Activated CD4-positive, alpha-beta T cell treated with anti-CD3 and anti-CD28 coated beads for 36 hours (primary cell): ENCODE measurements at regions of chr2 and their contacts with region 1.

Region 1: GRCh38 chr2:64228126-64228678 is 84.0 kb upstream of the PELI1 start:
- DNase-seq: peak; percentile 80
- ATAC-seq: peak; percentile 83
- H3K4me3 Mint-ChIP-seq: peak overlapping the region; percentile 72
- H3K27ac Mint-ChIP-seq: peak overlapping the region; percentile 91
- H3K4me1 Mint-ChIP-seq: peaks cover 28% of the 10 kb centered on the region
- H3K27me3 Mint-ChIP-seq: peaks cover 2% of the 10 kb centered on the region

Region 2: DNA sequence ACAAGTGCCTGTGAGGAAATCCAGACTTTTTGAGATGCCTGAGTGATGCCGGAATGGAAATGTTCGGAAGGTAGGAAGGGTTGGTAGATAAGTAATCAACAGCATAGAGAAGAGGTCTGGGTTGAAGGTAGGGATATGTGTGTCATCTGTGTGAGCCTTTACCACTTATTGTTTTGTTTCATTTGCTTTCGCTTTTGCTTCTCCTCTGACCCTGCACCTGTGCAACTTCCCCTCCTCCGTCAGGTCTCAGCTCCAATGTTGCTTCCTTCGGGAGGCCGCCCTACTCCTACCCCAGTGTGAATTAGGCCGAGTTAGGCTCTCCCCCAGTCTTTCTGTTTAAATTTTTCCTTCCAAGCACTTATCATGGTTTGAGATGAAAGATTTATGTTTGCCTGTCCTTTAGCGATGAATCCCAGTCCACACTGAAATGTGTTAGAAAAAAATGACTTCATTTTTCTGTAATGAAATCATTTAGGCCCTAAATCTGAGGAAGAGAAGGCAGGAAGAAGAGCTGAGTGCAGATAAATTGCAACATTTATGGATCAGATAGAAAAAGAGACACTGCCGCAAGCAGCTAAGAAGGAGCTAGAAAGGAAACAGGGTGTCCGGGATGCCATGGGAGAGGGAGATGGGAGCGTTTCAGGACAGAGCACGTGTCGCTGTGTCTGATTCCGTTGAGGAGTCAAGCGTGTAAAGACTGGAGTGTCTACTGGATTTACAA is 55.6 kb after region 1 on chr2:
- CTCF ChIA-PET with region 1: interaction called, 3 read pairs
- POLR2A ChIA-PET with region 1: interaction called, 3 read pairs
- intact Hi-C with region 1: loop called in 1 of 2 experiments (anchors 5 kb)
- DNase-seq: peak; percentile 39
- ATAC-seq: peak; percentile 100
- H3K4me3 Mint-ChIP-seq: no peak overlapping the region
- H3K27ac Mint-ChIP-seq: no peak overlapping the region
- H3K4me1 Mint-ChIP-seq: no peaks in the 10 kb centered on the region
- H3K27me3 Mint-ChIP-seq: no peaks in the 10 kb centered on the region

Region 3: DNA sequence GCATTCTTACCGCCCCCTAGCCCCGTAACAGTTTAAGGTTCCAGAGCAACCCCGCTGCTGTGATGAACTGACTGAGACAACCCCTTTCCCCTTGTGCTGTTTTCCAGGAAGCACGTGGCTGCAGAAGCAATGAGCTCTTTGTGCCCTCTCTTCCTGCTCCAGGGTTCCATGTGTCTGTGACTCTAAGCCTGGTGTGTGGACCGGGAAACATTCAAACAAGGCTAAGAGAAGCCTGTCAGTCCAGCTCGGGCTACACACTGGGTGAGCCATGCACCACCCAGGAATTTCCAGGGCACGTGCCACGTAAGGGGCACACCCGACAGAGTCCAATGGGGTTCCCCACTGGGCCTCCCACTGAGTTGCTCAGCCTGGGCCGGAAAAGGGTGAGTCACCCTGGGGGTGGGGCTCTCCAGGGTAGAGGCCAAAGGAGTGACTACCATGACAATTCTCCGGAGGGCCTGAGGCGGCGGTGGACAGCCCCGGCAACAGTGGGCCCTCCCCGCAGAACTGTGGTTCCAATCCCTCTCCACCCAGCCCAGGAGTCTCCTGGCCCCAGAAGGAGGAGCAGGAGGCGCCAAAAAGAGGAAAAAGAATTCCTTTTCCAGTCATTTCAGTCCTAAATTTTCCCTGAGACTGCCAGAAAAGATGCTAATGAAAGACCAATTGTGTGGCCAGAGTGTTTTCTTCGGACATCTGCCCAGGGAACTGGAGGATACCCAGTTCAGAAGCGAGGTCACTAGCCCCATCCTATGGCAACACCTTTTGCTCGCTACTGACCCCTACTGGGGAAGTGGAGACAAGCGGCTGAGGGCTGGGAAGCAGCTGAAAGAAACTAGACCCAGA is 603.2 kb after region 1 on chr2:
- CTCF ChIA-PET with region 1: no interaction called
- POLR2A ChIA-PET with region 1: no interaction called
- intact Hi-C with region 1: no loop called
- DNase-seq: peak; percentile 92
- ATAC-seq: peak; percentile 96
- H3K4me3 Mint-ChIP-seq: peak overlapping the region; percentile 34
- H3K27ac Mint-ChIP-seq: peak overlapping the region; percentile 86
- H3K4me1 Mint-ChIP-seq: peaks cover 16% of the 10 kb centered on the region
- H3K27me3 Mint-ChIP-seq: no peaks in the 10 kb centered on the region